Endothelial cell of umbilical vein (primary cell): ENCODE measurements at regions of chr13 and their contacts with region 1.

Region 1: GRCh38 chr13:33542283-33543088 is 256.9 kb upstream of the STARD13 start:
- DNase-seq: peak; percentile 100
- H3K4me3 ChIP-seq: peak overlapping the region; percentile 24 to 67 (median 37)
- H3K27ac ChIP-seq: peak overlapping the region; percentile 100
- H3K4me1 ChIP-seq: peaks cover 23% of the 10 kb centered on the region
- H3K27me3 ChIP-seq: no peaks in the 10 kb centered on the region
- CTCF ChIP-seq: peak; percentile 94 to 98
- POLR2A ChIP-seq: peak; percentile 64

Region 2: DNA sequence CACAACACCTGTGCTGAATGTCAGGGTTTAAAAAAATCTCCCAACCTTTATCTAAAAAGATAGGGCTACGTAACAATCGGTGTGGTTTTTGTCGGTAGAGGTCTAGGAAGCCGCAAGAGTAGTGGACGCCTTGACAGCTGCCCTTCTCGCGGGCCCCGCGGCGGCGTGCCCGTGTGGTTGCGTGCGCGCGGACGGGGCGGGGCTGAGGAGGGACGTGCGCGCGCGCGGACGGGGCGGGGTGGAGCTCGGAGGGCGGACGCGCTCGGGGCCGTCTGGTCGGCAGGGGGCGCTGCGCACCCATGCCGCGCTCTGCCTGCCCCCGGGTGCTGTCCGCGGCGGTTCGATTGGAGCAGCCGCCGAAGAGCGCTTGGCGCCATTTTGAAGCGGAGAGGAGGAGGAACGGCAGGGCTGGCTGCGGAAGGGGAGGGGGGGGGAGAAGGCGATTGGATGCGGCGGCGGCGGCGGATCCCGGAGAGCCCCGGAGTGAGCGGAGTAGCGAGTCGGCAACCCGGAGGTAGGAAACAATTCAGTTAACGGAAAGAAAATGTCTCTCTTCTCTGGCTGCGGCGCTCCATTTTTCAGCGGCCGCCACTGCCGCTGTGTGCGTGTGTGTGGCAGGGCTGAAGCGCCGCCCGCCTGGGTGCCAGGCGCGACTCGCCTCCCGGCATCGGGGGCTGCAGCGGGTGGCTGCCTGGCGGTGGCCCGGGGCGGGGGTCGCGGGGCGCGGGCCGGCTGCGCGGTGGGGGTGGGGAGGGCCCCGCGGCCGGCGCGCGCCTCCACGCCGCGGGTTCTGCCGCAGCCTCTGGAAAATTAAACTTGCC is 956.2 kb before region 1 on chr13 and contains the start of gene PDS5B:
- CTCF ChIA-PET with region 1: interaction called, 21 read pairs
- POLR2A ChIA-PET with region 1: interaction called, 3 read pairs
- dilution Hi-C with region 1: no loop called
- intact Hi-C with region 1: no loop called
- DNase-seq: peak; percentile 96
- H3K4me3 ChIP-seq: peak within 1 kb of the TSS; percentile 43 to 98 (median 89)
- H3K27ac ChIP-seq: peak within 1 kb of the TSS; percentile 86
- H3K4me1 ChIP-seq: peaks cover 20% of the 10 kb centered on the region
- H3K27me3 ChIP-seq: peaks cover 0 to 1% of the 10 kb centered on the region in 2 experiments
- CTCF ChIP-seq: peak; percentile 76 to 93
- POLR2A ChIP-seq: peak; percentile 83
- total RNA-seq, gene PDS5B: 40.3 and 41.0 TPM in 2 replicates

Region 3: GRCh38 chr13:33153421-33154404 is 388.8 kb before region 1 on chr13:
- CTCF ChIA-PET with region 1: interaction called, 15 read pairs
- POLR2A ChIA-PET with region 1: no interaction called
- dilution Hi-C with region 1: no loop called
- intact Hi-C with region 1: loop called (anchors 1 kb)
- DNase-seq: peak; percentile 96
- H3K4me3 ChIP-seq: no peak overlapping the region
- H3K27ac ChIP-seq: peak overlapping the region; percentile 91
- H3K4me1 ChIP-seq: peaks cover 31% of the 10 kb centered on the region
- H3K27me3 ChIP-seq: no peaks in the 10 kb centered on the region
- CTCF ChIP-seq: peak; percentile 59 to 65
- POLR2A ChIP-seq: peak; percentile 46

Region 4: DNA sequence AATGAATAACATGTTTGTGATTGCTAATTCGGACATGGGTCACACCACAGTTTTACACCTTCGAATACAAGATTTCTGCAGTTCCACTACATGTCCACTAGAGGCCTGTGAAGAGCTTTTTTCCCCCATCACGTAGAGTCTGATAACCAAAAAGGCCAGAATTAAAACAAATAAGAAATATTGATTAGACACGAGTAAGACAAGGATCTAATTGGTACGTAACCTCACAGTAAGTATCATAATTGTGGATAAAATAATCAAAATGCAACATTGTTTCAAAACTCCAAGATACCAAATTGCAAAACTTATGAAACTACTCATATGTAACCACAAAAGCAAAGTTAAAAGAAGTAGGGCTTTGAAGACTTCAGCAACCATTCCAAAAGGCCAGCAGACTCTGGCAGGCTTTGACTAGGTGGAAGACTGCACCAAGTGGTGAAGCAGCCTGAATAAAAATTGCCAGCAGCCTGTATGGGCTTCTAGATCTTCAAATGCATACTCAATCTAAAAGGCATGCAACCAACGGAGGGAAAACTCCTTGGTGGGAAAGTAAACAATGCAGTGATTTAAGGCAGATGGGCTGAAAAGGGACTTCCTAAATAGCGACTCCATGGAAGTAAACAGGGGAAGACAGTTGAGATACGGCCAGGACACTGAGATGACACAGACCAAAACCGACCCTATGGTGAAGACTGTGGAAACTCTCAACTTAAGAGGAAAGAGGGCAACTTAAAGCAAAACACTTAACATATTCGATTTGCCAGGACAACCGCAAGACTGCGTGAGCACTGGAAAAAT is 313.6 kb before region 1 on chr13:
- CTCF ChIA-PET with region 1: interaction called, 47 read pairs
- POLR2A ChIA-PET with region 1: no interaction called
- dilution Hi-C with region 1: no loop called
- intact Hi-C with region 1: loop called (anchors 1 kb)
- DNase-seq: peak; percentile 71
- H3K4me3 ChIP-seq: no peak overlapping the region
- H3K27ac ChIP-seq: peak overlapping the region; percentile 46
- H3K4me1 ChIP-seq: peaks cover 31% of the 10 kb centered on the region
- H3K27me3 ChIP-seq: no peaks in the 10 kb centered on the region
- CTCF ChIP-seq: peak; percentile 65 to 70
- POLR2A ChIP-seq: no peak

Region 5: DNA sequence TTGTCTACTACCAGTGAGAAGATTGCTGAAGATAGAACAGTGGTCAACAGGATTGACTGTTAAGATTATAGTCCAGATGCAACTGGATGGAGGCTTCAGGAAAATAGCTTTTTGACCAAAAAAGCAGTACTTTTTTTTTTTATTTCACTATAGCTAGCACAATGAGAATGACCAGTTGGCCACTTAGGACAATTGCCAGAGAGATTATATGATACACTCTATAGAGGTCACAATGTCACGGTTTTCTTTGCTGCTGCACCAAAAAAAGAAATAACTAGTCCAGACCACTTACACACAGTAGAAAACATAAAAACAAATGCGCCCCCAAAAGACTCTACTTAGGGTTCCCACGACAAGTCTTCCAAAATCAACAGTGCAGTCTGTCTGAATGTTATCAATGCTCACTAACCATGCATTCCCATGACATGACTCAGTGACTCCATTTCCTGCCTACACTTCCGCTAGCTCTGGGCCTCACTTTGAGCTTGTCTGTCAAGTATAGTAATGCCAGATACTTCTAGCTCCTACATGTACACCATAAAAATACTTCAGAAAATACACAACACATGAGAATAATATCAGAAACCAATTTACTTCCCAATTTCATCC is 47.8 kb before region 1 on chr13:
- CTCF ChIA-PET with region 1: interaction called, 11 read pairs
- POLR2A ChIA-PET with region 1: no interaction called
- dilution Hi-C with region 1: no loop called
- intact Hi-C with region 1: loop called (anchors 1 kb)
- DNase-seq: peak; percentile 99
- H3K4me3 ChIP-seq: peak overlapping the region in 1 of 3 experiments; percentile 26
- H3K27ac ChIP-seq: peak overlapping the region; percentile 98
- H3K4me1 ChIP-seq: peaks cover 66% of the 10 kb centered on the region
- H3K27me3 ChIP-seq: no peaks in the 10 kb centered on the region
- CTCF ChIP-seq: no peak
- POLR2A ChIP-seq: peak; percentile 71

Region 6: GRCh38 chr13:34076943-34077703 is 534.6 kb after region 1 on chr13:
- CTCF ChIA-PET with region 1: interaction called, 5 read pairs
- POLR2A ChIA-PET with region 1: no interaction called
- dilution Hi-C with region 1: no loop called
- intact Hi-C with region 1: loop called (anchors 2 kb)
- DNase-seq: peak; percentile 48
- H3K4me3 ChIP-seq: no peak overlapping the region
- H3K27ac ChIP-seq: no peak overlapping the region
- H3K4me1 ChIP-seq: peaks cover 14% of the 10 kb centered on the region
- H3K27me3 ChIP-seq: no peaks in the 10 kb centered on the region
- CTCF ChIP-seq: peak; percentile 40 to 41
- POLR2A ChIP-seq: no peak

Region 7: DNA sequence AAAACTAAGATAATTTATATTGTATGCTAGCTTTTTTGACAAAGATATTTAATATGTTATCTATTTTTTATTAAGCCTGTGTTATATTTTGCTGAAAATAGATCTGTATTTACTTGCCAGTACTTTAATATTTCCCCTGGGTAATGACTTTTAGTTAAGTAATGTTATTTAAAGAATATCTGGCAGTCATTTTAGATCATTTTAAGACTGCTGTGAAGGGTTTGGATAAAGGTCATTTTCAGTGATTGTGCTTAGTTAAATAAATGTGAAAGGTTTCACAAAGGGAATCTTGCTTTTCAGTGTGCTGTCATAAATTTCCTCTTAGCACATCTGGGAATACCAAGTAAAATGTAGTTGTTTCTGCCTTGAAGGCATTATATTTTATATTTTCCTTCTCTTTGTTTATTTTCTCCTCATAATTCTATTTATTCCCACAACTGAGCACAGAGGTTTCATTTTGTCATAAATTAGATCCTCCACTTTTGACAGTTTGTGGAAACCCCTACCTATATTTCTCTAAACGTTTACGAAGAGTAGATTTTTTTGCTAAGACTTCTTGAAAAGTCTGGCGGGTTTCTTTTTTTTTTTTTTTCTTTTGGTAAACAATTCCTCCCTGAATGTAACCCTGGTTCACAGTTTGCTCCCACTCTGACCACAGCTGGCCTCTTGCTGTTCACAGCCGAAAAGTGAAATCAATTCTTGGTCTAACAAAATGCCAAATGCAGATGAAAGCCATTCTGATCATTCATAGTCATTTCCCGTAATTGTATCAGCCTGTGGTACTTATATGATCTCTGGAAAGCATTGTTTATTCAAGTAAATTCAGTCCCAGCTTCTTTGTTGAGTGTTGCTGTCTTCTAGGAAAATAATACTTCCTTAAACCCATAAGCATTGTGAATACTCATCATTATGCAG is 1846.2 kb after region 1 on chr13:
- CTCF ChIA-PET with region 1: no interaction called
- POLR2A ChIA-PET with region 1: no interaction called
- dilution Hi-C with region 1: no loop called
- intact Hi-C with region 1: no loop called
- DNase-seq: peak; percentile 87
- H3K4me3 ChIP-seq: peak overlapping the region in 1 of 3 experiments; percentile 15
- H3K27ac ChIP-seq: peak overlapping the region; percentile 26
- H3K4me1 ChIP-seq: peaks cover 31% of the 10 kb centered on the region
- H3K27me3 ChIP-seq: no peaks in the 10 kb centered on the region
- CTCF ChIP-seq: no peak
- POLR2A ChIP-seq: no peak